Dendritic cell treated with granulocyte-macrophage colony-stimulating factor and Interleukin-4, amounts not matched to agents 40 ng/mL and 50 ng/mL, for 4 days (primary cell): ENCODE measurements at regions of chr4 and their contacts with region 1.

Region 1: GRCh38 chr4:47463235-47463956 is at the start of gene COMMD8:
- H3K4me3 Mint-ChIP-seq: peak within 1 kb of the TSS; percentile 87
- H3K27ac Mint-ChIP-seq: peak within 1 kb of the TSS; percentile 93
- H3K4me1 Mint-ChIP-seq: peaks cover 34% of the 10 kb centered on the region
- H3K27me3 Mint-ChIP-seq: no peaks in the 10 kb centered on the region

Region 2: DNA sequence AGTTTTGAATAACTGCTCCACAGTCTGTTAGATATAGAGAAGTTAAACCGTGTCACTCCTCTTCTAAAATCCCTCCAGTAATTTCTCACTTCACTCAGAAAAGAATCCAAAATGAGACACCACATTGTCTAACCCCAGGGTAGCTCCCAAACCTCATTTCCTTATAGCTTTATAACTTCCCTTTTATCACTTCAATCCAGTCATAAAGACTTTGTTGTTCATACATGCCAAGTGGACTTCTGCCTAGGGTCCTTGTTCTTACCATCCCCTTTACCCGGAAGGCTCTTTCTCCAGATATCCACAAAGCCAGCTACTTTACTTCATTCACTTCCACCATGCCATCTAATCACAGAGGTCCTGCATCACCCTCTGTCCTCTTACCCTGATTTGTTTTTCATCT is 275.8 kb before region 1 on chr4:
- intact Hi-C with region 1: no loop called
- H3K4me3 Mint-ChIP-seq: no peak overlapping the region
- H3K27ac Mint-ChIP-seq: no peak overlapping the region
- H3K4me1 Mint-ChIP-seq: no peaks in the 10 kb centered on the region
- H3K27me3 Mint-ChIP-seq: peaks cover 26% of the 10 kb centered on the region

Region 3: GRCh38 chr4:47451657-47452056 is 11.7 kb before region 1 on chr4:
- intact Hi-C with region 1: no loop called
- H3K4me3 Mint-ChIP-seq: no peak overlapping the region
- H3K27ac Mint-ChIP-seq: no peak overlapping the region
- H3K4me1 Mint-ChIP-seq: no peaks in the 10 kb centered on the region
- H3K27me3 Mint-ChIP-seq: no peaks in the 10 kb centered on the region

Region 4: DNA sequence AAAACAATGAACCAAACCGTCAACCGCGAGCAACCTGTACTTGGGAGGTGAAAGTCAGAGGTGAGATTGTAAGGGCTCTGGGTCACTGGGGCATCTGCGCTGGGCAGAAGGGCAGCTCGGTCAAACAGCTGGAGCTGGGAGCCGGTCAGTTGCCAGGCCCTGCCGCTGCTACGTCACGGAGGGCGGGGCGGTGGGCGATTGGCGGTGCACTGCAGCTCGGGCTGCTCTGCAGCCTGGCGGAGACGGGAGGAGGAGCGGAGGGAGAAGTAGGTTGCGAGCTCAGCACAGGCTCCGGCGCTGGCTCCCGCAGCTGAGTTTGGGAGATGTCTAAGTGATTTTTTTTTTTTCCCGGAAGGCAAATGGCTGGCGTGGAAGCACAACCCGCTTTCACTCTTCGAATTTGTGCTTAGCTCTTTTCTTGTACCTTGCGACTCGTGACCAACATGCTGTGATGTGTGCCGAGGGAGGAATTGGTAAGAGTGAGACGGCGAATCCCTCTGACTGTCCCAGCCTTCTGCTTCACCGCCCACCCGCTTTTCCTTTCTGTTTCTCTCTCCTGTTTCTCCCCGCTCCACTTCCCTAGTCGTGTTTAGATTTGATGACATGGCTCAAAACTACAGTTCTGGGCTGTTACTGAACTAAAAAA is 21.8 kb after region 1 on chr4 and contains the start of gene ATP10D:
- intact Hi-C with region 1: loop called (anchors 1 kb)
- H3K4me3 Mint-ChIP-seq: peak within 1 kb of the TSS; percentile 90
- H3K27ac Mint-ChIP-seq: peak within 1 kb of the TSS; percentile 100
- H3K4me1 Mint-ChIP-seq: peaks cover 28% of the 10 kb centered on the region
- H3K27me3 Mint-ChIP-seq: no peaks in the 10 kb centered on the region

Region 5: GRCh38 chr4:47567511-47567910 is 104.1 kb after region 1 on chr4:
- intact Hi-C with region 1: loop called (anchors 5 kb)
- H3K4me3 Mint-ChIP-seq: no peak overlapping the region
- H3K27ac Mint-ChIP-seq: no peak overlapping the region
- H3K4me1 Mint-ChIP-seq: peaks cover 21% of the 10 kb centered on the region
- H3K27me3 Mint-ChIP-seq: no peaks in the 10 kb centered on the region